ENCODE measurements at regions of chr16 and their contacts with region 1.

Region 1: DNA sequence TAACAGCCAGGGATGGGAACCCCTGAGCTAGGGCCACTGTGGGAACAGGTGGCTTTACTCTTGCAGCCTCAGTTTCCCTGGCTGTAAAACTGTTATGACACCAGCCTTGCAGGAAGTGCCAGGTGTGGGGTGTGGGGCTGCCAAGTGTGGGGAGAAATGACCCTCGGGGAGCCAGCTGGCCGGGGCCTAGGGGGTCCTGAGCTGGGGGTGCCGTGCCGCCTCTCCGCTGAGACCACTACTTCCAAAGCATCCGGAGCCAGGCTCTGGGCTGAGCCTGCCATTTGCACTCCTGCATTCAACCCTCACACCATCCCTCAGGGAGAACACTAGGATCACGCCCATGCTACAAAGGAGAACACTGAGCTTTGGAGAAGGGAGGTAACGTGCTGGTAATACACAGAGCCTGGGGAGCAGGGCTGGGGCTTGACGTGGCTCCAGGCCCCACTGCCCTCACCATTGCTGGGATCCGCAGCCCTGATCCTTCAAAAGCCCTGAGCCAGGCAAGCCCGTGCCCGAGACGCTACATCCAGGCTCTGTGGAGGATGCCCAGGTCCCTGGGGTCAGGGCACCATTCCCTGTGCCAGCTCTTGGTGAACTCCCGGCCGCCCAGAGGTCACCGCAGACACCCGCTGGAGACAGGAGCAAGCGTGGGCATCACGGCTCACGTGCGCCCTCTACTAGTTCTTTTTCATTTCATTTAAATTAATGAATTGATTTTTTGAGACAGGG is 28.8 kb upstream of the GINS2 start:
- DNase-seq: peak; percentile 89
- H3K4me3 ChIP-seq: no peak overlapping the region
- H3K27ac ChIP-seq: no peak overlapping the region
- H3K4me1 ChIP-seq: peaks cover 0 to 17% of the 10 kb centered on the region in 2 experiments; a peak in 1 of 4 replicates
- H3K27me3 ChIP-seq: no peaks in the 10 kb centered on the region
- CTCF ChIP-seq: peak; percentile 78
- EP300 ChIP-seq: no peak
- RAD21 ChIP-seq: peak; percentile 87

Region 2: DNA sequence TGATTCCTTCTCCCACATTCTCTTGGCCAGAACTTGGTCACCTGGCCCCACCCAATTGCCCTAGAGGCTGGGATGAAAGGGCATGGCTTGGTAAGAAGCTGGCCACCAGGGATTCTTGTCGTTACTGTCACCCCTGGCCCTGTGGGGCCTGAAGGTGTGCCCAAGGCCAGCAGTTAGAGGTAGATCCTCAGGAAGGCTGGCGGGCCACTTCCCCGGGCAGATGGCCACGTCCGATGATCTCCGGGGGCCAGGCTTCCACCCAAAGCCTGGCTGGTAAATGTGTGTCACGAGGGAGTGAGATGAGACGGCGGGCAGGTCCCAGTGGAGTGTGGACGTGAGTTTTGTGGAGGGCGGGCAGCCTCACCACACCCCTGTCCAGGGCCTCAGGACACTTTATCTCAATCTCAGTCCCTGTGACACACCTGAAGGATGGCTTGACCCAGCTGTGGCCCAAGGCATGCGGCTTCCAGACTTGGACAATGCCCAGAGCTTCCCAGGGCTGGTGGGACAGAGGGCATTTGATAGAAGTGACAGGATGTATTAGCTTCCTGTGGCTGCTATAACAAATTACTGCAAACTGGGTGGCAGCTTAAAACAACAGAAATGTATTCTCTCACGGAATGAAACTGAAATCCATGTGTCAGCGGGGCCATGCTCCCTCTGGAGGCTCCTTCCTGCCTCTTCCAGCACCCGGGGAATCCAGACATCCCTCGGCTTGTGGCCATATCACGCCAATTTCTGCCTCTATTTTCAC is 170.7 kb before region 1 on chr16:
- CTCF ChIA-PET with region 1: no interaction called
- POLR2A ChIA-PET with region 1: no interaction called
- DNase-seq: no peak
- H3K4me3 ChIP-seq: no peak overlapping the region
- H3K27ac ChIP-seq: no peak overlapping the region
- H3K4me1 ChIP-seq: peaks cover 0 to 37% of the 10 kb centered on the region in 2 experiments; a peak in 1 of 4 replicates
- H3K27me3 ChIP-seq: no peaks in the 10 kb centered on the region
- CTCF ChIP-seq: no peak
- EP300 ChIP-seq: no peak
- RAD21 ChIP-seq: peak; percentile 20

Region 3: DNA sequence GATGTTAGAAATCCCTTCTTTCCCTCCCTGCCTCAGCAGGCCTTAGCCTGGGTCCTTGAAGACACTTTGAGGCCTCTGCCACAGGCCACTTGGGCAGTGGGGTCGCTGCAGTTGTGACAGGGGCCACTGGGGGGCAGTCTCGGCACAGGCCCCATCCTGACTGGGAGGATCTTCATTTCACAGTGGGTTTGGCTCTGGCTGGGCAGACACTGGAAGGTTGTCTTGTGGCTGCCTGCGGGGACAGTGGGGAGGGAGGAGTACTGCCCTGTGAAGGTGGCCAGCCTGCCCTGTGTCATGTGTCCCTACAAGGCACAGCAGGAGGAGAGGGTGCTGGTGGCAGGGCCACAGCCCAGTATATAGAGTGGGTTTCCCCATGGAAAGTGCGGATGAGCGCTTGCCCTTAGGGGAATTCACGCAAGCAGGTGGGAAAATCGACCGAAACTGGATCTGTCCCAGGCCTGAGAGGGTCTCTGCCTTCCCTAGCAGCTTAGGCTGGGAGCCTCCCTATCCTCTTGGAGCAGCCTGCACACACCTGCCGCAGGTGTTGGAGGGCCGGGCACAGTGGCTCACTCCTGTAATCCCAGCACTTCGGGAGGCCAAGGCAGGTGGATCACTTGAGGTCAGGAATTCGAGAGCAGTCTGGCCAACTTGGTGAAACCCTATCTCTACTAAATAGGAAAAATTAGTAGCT is 57.6 kb before region 1 on chr16:
- CTCF ChIA-PET with region 1: interaction called, 91 read pairs
- POLR2A ChIA-PET with region 1: no interaction called
- DNase-seq: peak; percentile 93
- H3K4me3 ChIP-seq: no peak overlapping the region
- H3K27ac ChIP-seq: no peak overlapping the region; a peak in 1 of 4 replicates
- H3K4me1 ChIP-seq: peaks cover 0 to 36% of the 10 kb centered on the region in 2 experiments; a peak in 1 of 4 replicates
- H3K27me3 ChIP-seq: no peaks in the 10 kb centered on the region
- CTCF ChIP-seq: peak; percentile 94
- EP300 ChIP-seq: no peak
- RAD21 ChIP-seq: peak; percentile 77

Region 4: DNA sequence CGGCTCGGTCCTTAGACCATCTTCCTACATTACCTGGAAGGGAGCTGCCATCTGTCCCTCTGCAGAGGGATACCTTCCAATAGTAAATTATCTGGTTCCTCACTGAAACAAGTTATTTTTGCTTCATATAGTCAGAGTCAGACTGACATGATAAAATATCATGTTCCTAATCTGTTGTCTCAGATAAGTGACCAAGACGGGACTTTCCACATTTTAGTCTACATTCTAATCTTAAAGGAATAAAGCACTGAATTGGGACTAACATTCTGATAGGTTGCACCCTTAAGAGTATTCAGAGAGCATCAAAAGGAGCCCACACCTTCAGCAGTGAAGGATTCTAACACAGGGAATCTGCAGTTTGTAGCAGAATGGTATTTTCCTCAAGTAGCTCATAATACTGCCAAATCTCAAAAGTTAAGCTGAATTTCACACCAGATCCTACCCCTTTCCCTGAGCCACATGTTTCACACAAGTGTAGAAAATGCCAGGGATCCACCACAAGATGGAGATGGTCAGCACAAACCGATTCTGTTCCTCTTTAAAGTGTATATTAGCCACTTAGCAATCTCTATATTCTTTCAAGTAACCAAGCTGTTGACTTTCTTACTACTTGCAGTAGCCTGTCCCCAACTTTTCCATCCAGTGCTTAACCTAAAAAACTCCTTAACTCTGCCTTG is 42.2 kb before region 1 on chr16:
- CTCF ChIA-PET with region 1: interaction called, 138 read pairs
- POLR2A ChIA-PET with region 1: no interaction called
- DNase-seq: no peak
- H3K4me3 ChIP-seq: no peak overlapping the region
- H3K27ac ChIP-seq: peak overlapping the region in 1 of 2 experiments; percentile 96; a peak in 2 of 4 replicates
- H3K4me1 ChIP-seq: peaks cover 9 to 47% of the 10 kb centered on the region in 2 experiments; a peak in 2 of 4 replicates
- H3K27me3 ChIP-seq: no peaks in the 10 kb centered on the region
- CTCF ChIP-seq: peak; percentile 57
- EP300 ChIP-seq: no peak
- RAD21 ChIP-seq: peak; percentile 49

Region 5: GRCh38 chr16:85699628-85700027 is 17.9 kb before region 1 on chr16:
- CTCF ChIA-PET with region 1: interaction called, 15 read pairs
- POLR2A ChIA-PET with region 1: no interaction called
- DNase-seq: peak; percentile 12
- H3K4me3 ChIP-seq: no peak overlapping the region
- H3K27ac ChIP-seq: no peak overlapping the region
- H3K4me1 ChIP-seq: peaks cover 0 to 4% of the 10 kb centered on the region in 2 experiments; a peak in 1 of 4 replicates
- H3K27me3 ChIP-seq: no peaks in the 10 kb centered on the region
- CTCF ChIP-seq: no peak
- EP300 ChIP-seq: no peak
- RAD21 ChIP-seq: no peak